GM10248 (cell line): ENCODE measurements at regions of chr10 and their contacts with region 1.

Region 1: GRCh38 chr10:43689955-43690771 is 41.5 kb upstream of the ZNF32 start:
- DNase-seq: peak; percentile 92
- CTCF ChIP-seq: peak; percentile 98

Region 2: GRCh38 chr10:43671656-43672531 is 18.3 kb before region 1 on chr10:
- CTCF ChIA-PET with region 1: interaction called, 13 read pairs
- POLR2A ChIA-PET with region 1: no interaction called
- DNase-seq: peak; percentile 75
- CTCF ChIP-seq: peak; percentile 70

Region 3: GRCh38 chr10:43706166-43706565 is 16.0 kb after region 1 on chr10:
- CTCF ChIA-PET with region 1: interaction called, 14 read pairs
- POLR2A ChIA-PET with region 1: no interaction called
- DNase-seq: no peak
- CTCF ChIP-seq: no peak

Region 4: GRCh38 chr10:44030143-44030542 is 340.0 kb after region 1 on chr10:
- CTCF ChIA-PET with region 1: interaction called, 15 read pairs
- POLR2A ChIA-PET with region 1: no interaction called
- DNase-seq: peak; percentile 61
- CTCF ChIP-seq: peak; percentile 31

Region 5: GRCh38 chr10:44386546-44387052 is 696.4 kb after region 1 on chr10:
- CTCF ChIA-PET with region 1: interaction called, 54 read pairs
- POLR2A ChIA-PET with region 1: no interaction called
- DNase-seq: peak; percentile 85
- CTCF ChIP-seq: peak; percentile 76

Region 6: DNA sequence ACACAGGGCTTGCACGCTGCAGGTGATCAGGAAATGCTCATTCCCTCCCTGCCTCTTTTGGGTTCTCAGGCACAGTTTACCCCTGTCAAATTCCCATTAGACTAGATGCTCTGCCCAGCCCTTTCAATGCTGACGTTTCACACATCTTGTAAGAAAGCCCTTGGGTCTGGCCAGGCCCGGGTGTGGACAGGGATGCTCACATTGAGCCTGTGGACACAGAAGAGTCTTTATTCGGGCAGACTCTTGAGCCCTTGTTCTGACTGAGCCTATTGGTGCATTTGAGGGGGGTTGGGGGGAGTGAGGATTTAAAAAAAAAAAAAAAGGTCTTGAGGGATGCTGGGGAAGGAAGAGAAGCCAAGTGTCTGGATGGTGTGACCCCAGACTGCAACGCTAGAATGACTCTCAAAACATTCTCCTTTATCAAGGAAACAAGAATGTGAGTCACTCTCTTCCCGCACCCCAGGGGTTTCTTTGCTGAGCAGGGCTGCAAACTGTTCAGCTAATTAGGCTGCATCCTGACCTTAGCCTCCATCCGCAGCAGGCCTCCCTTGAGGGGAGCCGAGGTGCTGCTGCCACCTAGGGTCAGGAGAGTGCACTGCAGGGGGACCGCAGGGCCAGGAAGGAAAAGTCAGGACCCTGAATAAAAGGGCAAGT is 1167.3 kb after region 1 on chr10:
- CTCF ChIA-PET with region 1: interaction called, 14 read pairs
- POLR2A ChIA-PET with region 1: no interaction called
- DNase-seq: peak; percentile 80
- CTCF ChIP-seq: peak; percentile 99